ENCODE measurements at regions of chr3 and their contacts with region 1.

Region 1: GRCh38 chr3:137013955-137014688 is 56.3 kb downstream of the IL20RB start:
- DNase-seq: peak; percentile 93 to 98
- H3K4me3 ChIP-seq: no peak overlapping the region
- CTCF ChIP-seq: peak in 2 of 3 donors; percentile 86 to 92
- POLR2A ChIP-seq: no peak

Region 2: DNA sequence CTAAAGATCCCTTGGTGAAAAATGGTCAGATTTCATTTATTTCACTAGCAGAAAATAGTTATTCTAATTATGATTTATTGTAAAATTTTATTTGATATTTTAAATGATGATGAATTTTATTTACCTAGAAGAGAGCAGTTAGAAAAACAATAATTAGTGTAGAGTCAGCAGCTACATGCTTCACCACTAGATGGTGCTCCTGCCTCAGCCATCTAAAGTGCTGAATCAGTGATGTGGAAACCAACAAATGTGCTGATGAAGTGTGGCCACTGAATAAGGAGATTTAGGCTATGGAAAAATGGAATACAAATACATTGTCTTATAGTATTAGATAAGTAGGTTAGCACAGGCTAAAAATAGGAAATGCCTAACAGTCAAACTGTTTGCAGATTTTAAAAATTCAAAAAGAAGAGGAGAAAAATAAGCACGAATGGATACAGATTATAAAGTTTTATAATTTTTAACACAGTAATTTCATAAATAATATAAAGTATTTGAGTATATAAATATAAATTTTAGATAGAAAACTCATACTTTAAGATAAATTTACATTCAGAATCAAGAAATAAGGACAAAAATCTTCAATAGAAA is 938.8 kb before region 1 on chr3:
- intact Hi-C with region 1: loop called (anchors 5 kb)
- DNase-seq: peak in 1 of 2 donors; percentile 82
- H3K4me3 ChIP-seq: no peak overlapping the region
- CTCF ChIP-seq: peak in 1 of 3 donors; percentile 70
- POLR2A ChIP-seq: no peak

Region 3: GRCh38 chr3:136396916-136397315 is 617.2 kb before region 1 on chr3:
- intact Hi-C with region 1: loop called (anchors 10 kb)
- DNase-seq: no peak
- H3K4me3 ChIP-seq: no peak overlapping the region
- CTCF ChIP-seq: no peak
- POLR2A ChIP-seq: no peak

Region 4: DNA sequence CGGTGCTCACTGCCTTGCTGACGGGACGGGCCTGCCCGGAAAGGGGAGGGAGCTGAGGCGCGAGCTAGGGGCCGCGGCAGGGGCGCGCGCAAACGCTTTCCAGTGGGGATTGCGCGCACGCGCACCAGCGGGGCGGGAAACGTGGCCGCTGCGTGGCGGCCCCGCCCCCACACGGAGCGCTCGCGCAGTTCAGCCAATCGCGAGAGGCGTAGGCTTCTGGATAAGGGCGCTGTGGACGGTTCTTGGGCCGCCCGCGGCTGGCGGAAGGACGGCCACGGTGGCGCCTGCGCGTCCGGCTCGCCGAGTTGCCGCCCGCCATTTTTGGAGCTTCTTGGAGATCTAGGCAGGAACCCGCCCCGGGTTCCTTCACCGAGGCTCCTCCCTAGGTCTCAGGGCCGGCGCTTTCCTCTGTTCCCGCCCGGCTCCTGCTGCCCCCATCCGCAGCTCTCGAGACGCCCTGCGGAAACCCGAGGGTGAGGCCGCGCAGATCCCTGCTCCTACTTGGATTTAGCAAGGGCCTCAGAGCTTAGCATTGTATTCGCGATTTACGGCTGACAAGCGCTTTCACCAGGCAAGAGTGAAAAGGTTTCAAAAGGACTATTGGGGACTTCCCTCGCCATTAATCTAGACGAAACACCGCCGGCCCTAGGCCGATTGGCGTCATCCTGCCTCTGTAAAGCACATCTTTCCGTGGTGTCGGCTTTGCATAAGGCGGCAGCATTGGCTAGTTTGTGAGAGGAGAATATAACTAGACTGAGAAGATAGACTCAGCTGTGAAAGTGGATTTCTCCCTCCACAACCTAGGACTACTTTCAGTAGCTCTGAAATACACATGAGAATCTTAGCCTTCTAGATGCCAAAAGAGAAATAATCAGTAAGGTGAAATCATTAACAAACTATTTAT is 261.4 kb before region 1 on chr3:
- intact Hi-C with region 1: loop called (anchors 2 kb)
- DNase-seq: peak; percentile 97 to 100
- H3K4me3 ChIP-seq: peak overlapping the region; percentile 33
- CTCF ChIP-seq: no peak
- POLR2A ChIP-seq: peak in 1 of 2 donors; percentile 31

Region 5: GRCh38 chr3:136949708-136950107 is 64.4 kb before region 1 on chr3:
- intact Hi-C with region 1: loop called (anchors 10 kb)
- DNase-seq: no peak
- H3K4me3 ChIP-seq: no peak overlapping the region
- CTCF ChIP-seq: no peak
- POLR2A ChIP-seq: no peak